Ovary (tissue), 10 donors: ENCODE measurements at regions of chr6 and their contacts with region 1.

Region 1: GRCh38 chr6:105263685-105264610 is 84.1 kb upstream of the POPDC3 start:
- DNase-seq: no peak
- H3K4me3 ChIP-seq: no peak overlapping the region
- H3K27ac ChIP-seq: no peak overlapping the region
- H3K4me1 ChIP-seq: no peaks in the 10 kb centered on the region
- H3K27me3 ChIP-seq: no peaks in the 10 kb centered on the region
- CTCF ChIP-seq: no peak
- EP300 ChIP-seq: no peak
- POLR2A ChIP-seq: no peak

Region 2: DNA sequence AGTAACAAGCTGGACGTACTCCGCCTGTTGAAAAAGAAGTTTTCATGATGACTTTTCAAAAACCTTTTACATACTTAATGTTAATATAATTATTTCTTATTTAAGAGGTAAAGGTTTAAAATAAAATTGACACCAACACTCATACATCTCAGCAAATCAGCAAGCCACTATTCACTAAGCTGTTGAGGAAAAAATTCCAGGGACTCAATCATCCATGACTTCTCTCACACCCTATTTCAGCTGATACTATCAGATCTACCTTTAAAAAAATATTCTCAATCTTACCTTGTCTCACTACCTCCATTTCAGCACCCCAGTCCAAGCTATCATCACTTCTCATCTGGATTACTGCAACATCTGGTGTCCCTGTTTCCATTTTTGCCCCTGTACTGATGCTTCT is 513.5 kb before region 1 on chr6:
- intact Hi-C with region 1: no loop called
- DNase-seq: no peak
- H3K4me3 ChIP-seq: no peak overlapping the region
- H3K27ac ChIP-seq: no peak overlapping the region
- H3K4me1 ChIP-seq: no peaks in the 10 kb centered on the region
- H3K27me3 ChIP-seq: no peaks in the 10 kb centered on the region
- CTCF ChIP-seq: no peak
- EP300 ChIP-seq: no peak
- POLR2A ChIP-seq: no peak

Region 3: DNA sequence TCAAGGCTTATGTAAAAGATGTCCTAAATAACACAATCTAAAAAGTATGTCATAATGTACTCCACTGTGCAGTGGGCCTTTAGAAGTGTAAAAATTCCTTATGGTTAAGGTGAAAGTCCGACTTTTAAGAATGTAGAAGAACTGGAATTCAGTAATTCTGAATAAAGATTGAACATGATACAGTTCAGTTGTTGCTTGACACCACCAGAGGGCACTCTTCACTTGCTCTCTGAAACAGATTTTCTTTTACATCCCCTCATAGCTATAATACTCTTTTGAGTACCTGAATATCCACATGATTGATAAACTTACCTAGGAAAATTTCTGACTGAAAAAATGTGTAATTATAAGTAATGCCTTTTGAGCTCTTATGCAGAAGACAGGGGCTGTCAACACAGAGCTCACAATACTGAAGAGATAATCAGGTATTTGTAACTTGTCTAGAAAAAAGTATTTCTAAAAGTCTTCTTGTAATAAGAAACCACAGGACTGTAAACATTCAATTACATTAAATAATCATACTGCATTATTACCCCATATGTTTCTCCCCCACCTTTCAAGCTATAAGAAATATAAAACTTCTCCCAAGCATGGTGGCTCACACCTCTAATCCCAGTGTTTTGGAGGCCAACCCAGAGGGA is 176.3 kb before region 1 on chr6:
- intact Hi-C with region 1: no loop called
- DNase-seq: peak in 2 of 5 donors; percentile 13 to 47
- H3K4me3 ChIP-seq: no peak overlapping the region
- H3K27ac ChIP-seq: no peak overlapping the region
- H3K4me1 ChIP-seq: no peaks in the 10 kb centered on the region
- H3K27me3 ChIP-seq: no peaks in the 10 kb centered on the region
- CTCF ChIP-seq: peak; percentile 35 to 70 (median 58)
- EP300 ChIP-seq: no peak
- POLR2A ChIP-seq: no peak

Region 4: GRCh38 chr6:105282631-105283585 is 19.0 kb after region 1 on chr6:
- intact Hi-C with region 1: loop called in 1 of 4 experiments (anchors 2 kb)
- DNase-seq: no peak
- H3K4me3 ChIP-seq: no peak overlapping the region
- H3K27ac ChIP-seq: no peak overlapping the region
- H3K4me1 ChIP-seq: no peaks in the 10 kb centered on the region
- H3K27me3 ChIP-seq: no peaks in the 10 kb centered on the region
- CTCF ChIP-seq: no peak
- EP300 ChIP-seq: no peak
- POLR2A ChIP-seq: no peak